CD4-positive, alpha-beta T cell (primary cell): ENCODE measurements at regions of chr5 and their contacts with region 1.

Region 1: GRCh38 chr5:139293504-139294373 is at the start of gene MATR3:
- DNase-seq: peak; percentile 88 to 96 (median 92)
- ATAC-seq: peak; percentile 89
- H3K4me3 ChIP-seq: peak within 1 kb of the TSS; percentile 95
- H3K4me3 Mint-ChIP-seq: peak within 1 kb of the TSS; percentile 99
- H3K27ac ChIP-seq: peak within 1 kb of the TSS; percentile 98 to 100
- H3K27ac Mint-ChIP-seq: peak within 1 kb of the TSS; percentile 99
- H3K4me1 ChIP-seq: peaks cover 27% of the 10 kb centered on the region
- H3K4me1 Mint-ChIP-seq: peaks cover 52% of the 10 kb centered on the region
- H3K27me3 ChIP-seq: no peaks in the 10 kb centered on the region
- H3K27me3 Mint-ChIP-seq: no peaks in the 10 kb centered on the region
- CTCF ChIP-seq: no peak
- total RNA-seq, gene MATR3: 376 to 401 TPM

Region 2: GRCh38 chr5:139273572-139274289 is 20.0 kb before region 1 on chr5:
- CTCF ChIA-PET with region 1: interaction called, 8 read pairs
- POLR2A ChIA-PET with region 1: interaction called, 51 read pairs
- intact Hi-C with region 1: loop called (anchors 1 kb)
- DNase-seq: peak; percentile 69 to 93 (median 78)
- ATAC-seq: peak; percentile 86
- H3K4me3 ChIP-seq: peak overlapping the region; percentile 77
- H3K4me3 Mint-ChIP-seq: peak overlapping the region; percentile 78
- H3K27ac ChIP-seq: peak overlapping the region; percentile 38 to 47
- H3K27ac Mint-ChIP-seq: peak overlapping the region; percentile 67
- H3K4me1 ChIP-seq: peaks cover 46% of the 10 kb centered on the region
- H3K4me1 Mint-ChIP-seq: peaks cover 50% of the 10 kb centered on the region
- H3K27me3 ChIP-seq: no peaks in the 10 kb centered on the region
- H3K27me3 Mint-ChIP-seq: no peaks in the 10 kb centered on the region
- CTCF ChIP-seq: no peak

Region 3: GRCh38 chr5:139312075-139312474 is 18.3 kb after region 1 on chr5:
- CTCF ChIA-PET with region 1: no interaction called
- POLR2A ChIA-PET with region 1: interaction called, 79 read pairs
- intact Hi-C with region 1: loop called in 1 of 2 experiments (anchors 2 kb)
- DNase-seq: no peak
- ATAC-seq: no peak
- H3K4me3 ChIP-seq: no peak overlapping the region
- H3K4me3 Mint-ChIP-seq: peak overlapping the region; percentile 32
- H3K27ac ChIP-seq: no peak overlapping the region
- H3K27ac Mint-ChIP-seq: no peak overlapping the region
- H3K4me1 ChIP-seq: peaks cover 30% of the 10 kb centered on the region
- H3K4me1 Mint-ChIP-seq: peaks cover 78% of the 10 kb centered on the region
- H3K27me3 ChIP-seq: no peaks in the 10 kb centered on the region
- H3K27me3 Mint-ChIP-seq: no peaks in the 10 kb centered on the region
- CTCF ChIP-seq: no peak

Region 4: GRCh38 chr5:139844472-139845145 is 550.9 kb after region 1 on chr5:
- CTCF ChIA-PET with region 1: no interaction called
- POLR2A ChIA-PET with region 1: no interaction called
- intact Hi-C with region 1: loop called in 1 of 2 experiments (anchors 10 kb)
- DNase-seq: peak; percentile 45 to 81 (median 66)
- ATAC-seq: no peak
- H3K4me3 ChIP-seq: no peak overlapping the region
- H3K4me3 Mint-ChIP-seq: peak overlapping the region; percentile 74
- H3K27ac ChIP-seq: no peak overlapping the region
- H3K27ac Mint-ChIP-seq: no peak overlapping the region
- H3K4me1 ChIP-seq: peaks cover 15% of the 10 kb centered on the region
- H3K4me1 Mint-ChIP-seq: peaks cover 17% of the 10 kb centered on the region
- H3K27me3 ChIP-seq: peaks cover 12 to 21% of the 10 kb centered on the region in 2 experiments
- H3K27me3 Mint-ChIP-seq: peaks cover 38% of the 10 kb centered on the region
- CTCF ChIP-seq: peak; percentile 70